Activated naive CD8-positive, alpha-beta T cell treated with anti-CD3 and anti-CD28 coated beads, Interleukin-2, amount 10 ng/mL, durations not matched to agents 7 days and 5 days (primary cell): ENCODE measurements at regions of chr19 and their contacts with region 1.

Region 1: GRCh38 chr19:43532962-43533545 is at the start of gene ZNF575:
- DNase-seq: peak; percentile 86
- ATAC-seq: peak; percentile 64
- H3K4me3 Mint-ChIP-seq: peak within 1 kb of the TSS; percentile 87
- H3K27ac Mint-ChIP-seq: peak within 1 kb of the TSS; percentile 97
- H3K4me1 Mint-ChIP-seq: peaks cover 14% of the 10 kb centered on the region
- H3K27me3 Mint-ChIP-seq: no peaks in the 10 kb centered on the region
- total RNA-seq, gene ZNF575: 3.9 to 4.6 TPM

Region 2: GRCh38 chr19:43438291-43439096 is 94.6 kb before region 1 on chr19:
- POLR2A ChIA-PET with region 1: interaction called, 12 read pairs
- DNase-seq: no peak
- ATAC-seq: no peak
- H3K4me3 Mint-ChIP-seq: peak overlapping the region; percentile 48
- H3K27ac Mint-ChIP-seq: peak overlapping the region; percentile 77
- H3K4me1 Mint-ChIP-seq: peaks cover 17% of the 10 kb centered on the region
- H3K27me3 Mint-ChIP-seq: no peaks in the 10 kb centered on the region

Region 3: DNA sequence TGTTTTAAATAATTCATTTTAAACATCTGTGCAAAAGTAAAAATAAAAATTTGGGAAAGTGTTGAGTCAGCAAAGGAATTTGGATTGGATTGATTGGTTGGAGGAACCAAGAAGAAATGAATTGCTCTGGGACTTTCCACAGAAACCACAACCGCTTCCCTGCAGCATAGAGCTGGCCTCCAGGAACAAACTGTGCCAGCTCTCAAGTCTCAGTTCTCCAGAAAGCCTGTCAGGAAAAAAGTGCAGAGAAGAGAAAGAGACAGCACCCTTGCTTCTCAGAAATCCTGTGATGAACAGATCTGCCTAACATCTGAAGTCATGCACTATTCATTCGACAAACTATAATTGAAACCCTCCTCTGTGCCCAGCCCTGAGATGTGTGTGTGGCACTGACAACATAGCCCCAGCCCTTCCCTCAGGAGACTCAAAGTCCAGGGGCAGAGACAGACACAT is 82.5 kb before region 1 on chr19:
- POLR2A ChIA-PET with region 1: no interaction called
- DNase-seq: no peak
- ATAC-seq: no peak
- H3K4me3 Mint-ChIP-seq: no peak overlapping the region
- H3K27ac Mint-ChIP-seq: no peak overlapping the region
- H3K4me1 Mint-ChIP-seq: peaks cover 6% of the 10 kb centered on the region
- H3K27me3 Mint-ChIP-seq: no peaks in the 10 kb centered on the region

Region 4: DNA sequence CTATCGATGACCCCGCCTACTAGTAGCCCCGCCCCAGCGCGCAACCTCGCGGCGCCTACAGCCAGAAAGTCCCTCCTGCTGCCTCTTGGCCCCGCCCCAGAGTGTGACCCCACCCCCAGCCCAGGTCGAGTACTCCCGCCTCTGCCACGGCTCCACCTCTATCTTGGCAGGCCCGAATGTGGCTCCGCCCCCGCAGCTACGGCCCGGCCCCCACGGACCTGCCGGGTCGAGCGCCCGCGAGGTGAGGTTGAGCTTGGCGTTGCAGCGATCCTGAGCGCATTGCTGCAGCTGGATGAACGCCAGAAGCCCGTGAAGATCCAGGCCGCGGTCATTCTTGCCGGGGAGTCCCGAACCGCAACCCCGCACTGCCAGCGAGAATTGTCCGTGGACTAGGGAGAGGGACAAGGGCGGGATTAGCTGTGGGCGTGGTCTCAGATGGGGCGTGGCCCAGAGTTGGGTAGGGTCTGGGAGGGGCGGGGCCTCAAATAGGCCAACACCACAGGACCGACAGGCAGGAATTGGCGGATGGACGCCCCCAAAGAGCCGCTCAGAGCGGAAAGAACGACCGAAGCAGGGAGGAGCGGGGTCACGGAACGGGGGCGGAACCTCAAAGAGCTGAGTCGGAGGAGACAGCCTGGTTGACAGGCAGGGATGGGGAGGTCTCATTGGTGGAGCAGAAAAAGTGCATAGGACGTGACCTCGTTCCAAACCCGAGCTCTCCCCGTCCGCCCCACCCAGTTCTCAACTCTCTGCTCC is 69.5 kb before region 1 on chr19:
- POLR2A ChIA-PET with region 1: interaction called, 18 read pairs
- DNase-seq: peak; percentile 98
- ATAC-seq: peak; percentile 81
- H3K4me3 Mint-ChIP-seq: peak overlapping the region; percentile 82
- H3K27ac Mint-ChIP-seq: peak overlapping the region; percentile 91
- H3K4me1 Mint-ChIP-seq: peaks cover 14% of the 10 kb centered on the region
- H3K27me3 Mint-ChIP-seq: no peaks in the 10 kb centered on the region

Region 5: DNA sequence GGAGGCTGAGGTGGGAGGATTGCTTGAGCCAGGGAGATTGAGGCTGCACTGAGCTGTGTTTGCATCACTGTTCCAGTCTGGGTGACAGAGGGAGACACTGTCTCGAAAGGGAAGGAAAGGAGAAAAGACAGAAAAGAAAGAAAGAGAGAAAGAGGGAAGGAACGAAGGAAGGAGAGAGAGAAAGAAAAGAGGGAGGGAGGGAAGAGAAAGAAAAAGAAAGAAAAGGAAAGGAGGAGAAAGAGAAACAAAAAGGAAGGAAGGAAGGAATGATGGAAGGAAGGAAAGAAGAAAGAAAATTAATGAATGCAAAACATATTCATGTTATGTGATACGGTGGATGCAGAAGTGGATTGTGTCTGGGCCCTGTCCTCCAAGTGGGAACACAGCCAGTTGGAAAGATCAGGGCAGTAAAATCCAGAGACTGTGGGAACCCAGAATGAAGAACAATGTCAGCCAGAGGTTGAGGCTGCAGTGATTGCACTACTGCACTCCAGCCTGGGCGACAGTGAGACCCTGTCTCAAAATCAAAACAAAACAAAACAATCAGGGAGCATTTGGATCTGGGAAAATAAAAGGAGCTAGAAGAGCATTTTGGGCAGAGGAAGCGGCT is 34.7 kb before region 1 on chr19:
- POLR2A ChIA-PET with region 1: no interaction called
- DNase-seq: no peak
- ATAC-seq: no peak
- H3K4me3 Mint-ChIP-seq: no peak overlapping the region
- H3K27ac Mint-ChIP-seq: no peak overlapping the region
- H3K4me1 Mint-ChIP-seq: peaks cover 8% of the 10 kb centered on the region
- H3K27me3 Mint-ChIP-seq: no peaks in the 10 kb centered on the region

Region 6: DNA sequence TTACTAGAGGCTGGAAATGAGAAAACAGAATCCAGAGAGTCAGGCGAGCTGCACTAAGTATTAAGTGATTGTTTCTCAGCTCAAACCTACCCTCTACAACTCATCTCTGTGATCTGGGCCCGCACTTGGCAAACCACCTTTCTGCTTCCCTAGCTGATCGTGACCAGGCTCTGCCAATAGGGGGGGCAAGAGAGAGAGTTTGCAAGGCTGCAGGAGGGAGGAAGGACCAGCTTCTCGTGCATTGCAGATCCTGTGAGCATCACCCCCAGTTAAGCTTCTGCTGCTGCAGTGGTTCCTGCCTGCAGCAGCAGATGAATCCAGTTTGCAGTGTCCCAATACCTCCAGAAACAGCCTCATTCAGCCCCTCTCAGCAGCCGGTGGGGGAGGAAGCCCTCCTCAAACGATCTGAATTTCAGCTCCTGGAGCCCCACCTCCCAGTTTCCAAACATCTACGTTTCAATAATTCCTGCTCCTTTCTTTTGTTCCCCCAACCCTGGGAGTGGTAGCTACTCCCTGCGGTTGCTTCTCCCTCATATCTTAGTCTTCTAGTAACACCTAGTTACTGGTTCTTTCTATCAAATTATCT is 22.2 kb after region 1 on chr19:
- POLR2A ChIA-PET with region 1: interaction called, 22 read pairs
- DNase-seq: peak; percentile 80
- ATAC-seq: peak; percentile 97
- H3K4me3 Mint-ChIP-seq: no peak overlapping the region
- H3K27ac Mint-ChIP-seq: peak overlapping the region; percentile 44
- H3K4me1 Mint-ChIP-seq: peaks cover 5% of the 10 kb centered on the region
- H3K27me3 Mint-ChIP-seq: no peaks in the 10 kb centered on the region

Region 7: GRCh38 chr19:43562698-43563241 is 29.7 kb after region 1 on chr19:
- POLR2A ChIA-PET with region 1: interaction called, 22 read pairs
- DNase-seq: peak; percentile 70
- ATAC-seq: peak; percentile 91
- H3K4me3 Mint-ChIP-seq: peak overlapping the region; percentile 62
- H3K27ac Mint-ChIP-seq: peak overlapping the region; percentile 89
- H3K4me1 Mint-ChIP-seq: peaks cover 27% of the 10 kb centered on the region
- H3K27me3 Mint-ChIP-seq: no peaks in the 10 kb centered on the region

Region 8: DNA sequence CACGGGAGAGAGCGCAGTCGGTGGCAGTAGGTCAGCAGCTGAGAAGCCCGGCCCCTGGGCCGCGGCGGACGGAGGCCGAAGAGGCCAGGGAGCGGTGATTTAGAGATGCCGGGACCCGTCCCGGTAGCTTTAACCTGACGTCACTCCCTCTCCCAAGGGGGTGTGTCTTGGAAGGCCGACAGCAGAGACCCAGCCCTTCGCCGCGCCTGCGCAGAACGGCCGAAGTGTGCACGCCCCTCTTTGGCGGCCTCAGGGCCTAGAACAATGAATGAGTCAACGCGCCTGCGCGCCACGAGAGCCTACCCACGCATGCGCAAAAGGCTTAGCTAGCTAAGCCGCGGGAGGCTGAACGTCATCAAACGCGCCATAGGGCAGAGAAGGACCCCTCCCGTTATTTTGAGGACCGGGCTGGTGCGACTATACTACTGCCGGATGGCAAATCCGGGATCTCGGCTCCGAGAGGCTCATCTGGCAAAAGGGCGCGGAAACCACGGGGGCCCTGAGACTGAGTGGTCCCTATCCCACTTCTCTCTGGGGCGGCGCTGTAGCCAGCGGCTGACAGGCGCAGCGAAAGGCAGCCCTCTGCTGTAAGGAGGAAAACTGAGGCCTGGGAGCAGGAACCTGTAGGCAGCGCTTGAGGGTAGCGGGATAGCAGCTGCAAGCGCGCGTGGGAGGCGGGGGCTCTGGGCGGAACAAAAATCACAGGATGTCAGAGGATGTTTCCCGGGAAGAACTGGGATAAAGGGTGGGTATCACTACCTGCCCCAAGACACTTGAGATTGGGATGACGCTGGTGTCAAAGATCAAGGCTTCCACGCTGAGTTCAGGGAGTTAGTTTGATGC is 63.2 kb after region 1 on chr19 and contains the starts of genes IRGQ and ZNF576:
- POLR2A ChIA-PET with region 1: interaction called, 11 read pairs
- DNase-seq: peak; percentile 100
- ATAC-seq: peak; percentile 86
- H3K4me3 Mint-ChIP-seq: peak within 1 kb of the TSS; percentile 94
- H3K27ac Mint-ChIP-seq: peak within 1 kb of the TSS; percentile 97
- H3K4me1 Mint-ChIP-seq: peaks cover 33% of the 10 kb centered on the region
- H3K27me3 Mint-ChIP-seq: no peaks in the 10 kb centered on the region
- total RNA-seq, gene IRGQ: 12.4 to 13.9 TPM
- total RNA-seq, gene ZNF576: 15.3 to 17.8 TPM